Activated CD8-positive, alpha-beta memory T cell treated with anti-CD3 and anti-CD28 coated beads, Interleukin-2, amount 10 ng/mL, durations not matched to agents 7 days and 5 days (primary cell): ENCODE measurements at regions of chr11 and their contacts with region 1.

Region 1: GRCh38 chr11:62831520-62832335 is at the start of gene STX5:
- DNase-seq: peak; percentile 100
- ATAC-seq: peak; percentile 91
- H3K4me3 Mint-ChIP-seq: peak within 1 kb of the TSS; percentile 86
- H3K27ac Mint-ChIP-seq: peak within 1 kb of the TSS; percentile 98
- H3K4me1 Mint-ChIP-seq: peaks cover 34% of the 10 kb centered on the region
- H3K27me3 Mint-ChIP-seq: no peaks in the 10 kb centered on the region
- total RNA-seq, gene STX5: 30.8 to 38.4 TPM

Region 2: DNA sequence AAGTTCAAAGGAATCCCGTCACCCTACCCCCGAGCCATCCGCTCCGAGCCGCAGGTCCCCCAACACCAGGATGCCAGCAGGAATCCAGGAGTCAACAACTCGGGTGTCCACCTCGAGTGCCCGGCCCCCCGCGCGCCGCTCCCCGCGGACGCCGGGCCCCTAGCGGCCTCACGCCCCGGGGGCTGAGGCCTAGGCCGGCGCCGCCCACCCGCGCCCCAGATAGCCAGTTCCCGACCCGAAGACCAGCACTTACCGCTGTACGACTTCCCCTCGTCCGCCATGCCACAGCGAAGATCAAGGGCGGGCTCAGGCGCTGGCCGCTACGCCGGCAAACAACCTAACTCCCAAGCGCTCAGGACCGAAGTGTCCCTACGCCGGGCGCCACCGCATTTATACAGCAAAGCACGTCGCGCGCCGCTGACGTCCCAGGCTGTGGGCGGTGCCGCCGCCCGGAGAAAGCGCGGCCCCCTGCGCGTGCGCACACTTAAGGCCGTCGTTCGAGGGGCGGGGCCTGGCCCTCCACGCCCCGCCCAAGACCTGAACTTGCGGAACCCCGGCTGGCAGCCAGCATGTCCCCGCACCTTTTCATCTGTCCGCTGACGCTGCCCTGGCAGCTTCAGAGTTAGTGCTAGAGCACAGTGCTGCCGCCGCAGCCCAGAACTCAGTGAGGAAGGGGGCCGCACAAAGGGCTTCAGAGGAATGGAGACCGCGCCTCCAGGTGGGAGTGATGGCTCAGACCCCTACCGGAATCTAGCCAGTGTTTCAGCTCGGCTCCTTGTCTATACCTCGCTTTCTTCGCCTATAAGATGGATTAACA is 26.4 kb before region 1 on chr11 and contains the start of gene NXF1:
- CTCF ChIA-PET with region 1: interaction called, 10 read pairs
- DNase-seq: peak; percentile 95
- ATAC-seq: peak; percentile 83
- H3K4me3 Mint-ChIP-seq: peak within 1 kb of the TSS; percentile 99
- H3K27ac Mint-ChIP-seq: peak within 1 kb of the TSS; percentile 98
- H3K4me1 Mint-ChIP-seq: peaks cover 49% of the 10 kb centered on the region
- H3K27me3 Mint-ChIP-seq: no peaks in the 10 kb centered on the region
- total RNA-seq, gene NXF1: 93.6 to 120 TPM